Dorsolateral prefrontal cortex (tissue), 120 donors: ENCODE measurements at regions of chr20 and their contacts with region 1.

Region 1: GRCh38 chr20:18632196-18633009 is 44.5 kb downstream of the DTD1 start:
- DNase-seq: peak; percentile 52 to 85 (median 78)
- H3K4me3 ChIP-seq: no peak overlapping the region
- H3K27ac ChIP-seq: peak overlapping the region in 51 of 59 donors; percentile 3 to 88 (median 61)
- H3K27me3 ChIP-seq: no peaks in the 10 kb centered on the region
- CTCF ChIP-seq: peak; percentile 66 to 99 (median 92)

Region 2: GRCh38 chr20:18657575-18657974 is 25.2 kb after region 1 on chr20:
- intact Hi-C with region 1: no loop called
- DNase-seq: no peak
- H3K4me3 ChIP-seq: no peak overlapping the region
- H3K27ac ChIP-seq: no peak overlapping the region
- H3K27me3 ChIP-seq: no peaks in the 10 kb centered on the region
- CTCF ChIP-seq: no peak

Region 3: DNA sequence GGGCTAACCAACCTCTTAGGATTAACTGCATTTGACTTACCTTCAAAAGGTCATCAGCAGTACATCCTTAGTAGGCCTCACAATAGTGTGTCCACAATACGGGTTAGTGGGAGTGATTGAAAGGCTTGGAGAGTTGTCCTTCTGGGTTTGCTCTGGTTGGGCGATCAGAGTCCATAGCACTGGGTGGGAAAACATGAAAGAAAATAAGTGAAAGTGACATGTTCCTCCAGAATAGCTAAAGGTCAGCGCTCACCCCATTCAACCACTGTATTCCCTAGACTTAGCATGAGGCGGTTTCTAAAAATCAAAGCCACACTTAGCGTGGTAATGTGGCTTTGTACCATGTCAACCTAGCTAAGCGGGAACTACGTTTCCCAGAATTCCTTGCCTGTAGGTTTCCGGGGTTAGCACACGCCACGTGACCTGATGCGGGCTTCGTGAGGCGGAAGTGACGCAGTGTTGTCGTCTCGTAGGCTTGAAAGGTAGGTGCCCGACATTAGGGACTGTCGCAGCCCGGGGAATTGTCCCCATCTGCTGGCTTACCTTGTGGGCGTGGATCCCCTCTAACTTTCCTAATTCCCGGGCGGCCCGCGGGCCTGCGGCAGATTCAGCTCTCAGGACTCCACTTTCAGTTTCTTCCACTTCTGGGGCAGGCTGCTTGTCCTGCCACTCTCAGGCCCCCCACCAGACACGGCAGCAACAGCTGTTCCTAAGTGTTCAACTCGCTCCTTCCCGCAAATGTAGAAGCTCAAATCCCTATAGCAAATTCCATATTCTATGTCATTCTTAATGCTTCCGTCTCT is 161.4 kb after region 1 on chr20:
- intact Hi-C with region 1: loop called in 1 of 2 experiments (anchors 5 kb)
- DNase-seq: peak; percentile 87 to 96 (median 93)
- H3K4me3 ChIP-seq: peak overlapping the region; percentile 57 to 99 (median 81)
- H3K27ac ChIP-seq: peak overlapping the region; percentile 17 to 96 (median 88)
- H3K27me3 ChIP-seq: peaks cover 0 to 4% (median 0%) of the 10 kb centered on the region in 45 donors
- CTCF ChIP-seq: peak in 49 of 56 donors; percentile 7 to 66 (median 42)

Region 4: GRCh38 chr20:18805881-18806280 is 173.5 kb after region 1 on chr20:
- intact Hi-C with region 1: loop called in 1 of 2 experiments (anchors 10 kb)
- DNase-seq: no peak
- H3K4me3 ChIP-seq: no peak overlapping the region
- H3K27ac ChIP-seq: no peak overlapping the region
- H3K27me3 ChIP-seq: peaks cover 0 to 7% (median 0%) of the 10 kb centered on the region in 45 donors
- CTCF ChIP-seq: no peak

Region 5: DNA sequence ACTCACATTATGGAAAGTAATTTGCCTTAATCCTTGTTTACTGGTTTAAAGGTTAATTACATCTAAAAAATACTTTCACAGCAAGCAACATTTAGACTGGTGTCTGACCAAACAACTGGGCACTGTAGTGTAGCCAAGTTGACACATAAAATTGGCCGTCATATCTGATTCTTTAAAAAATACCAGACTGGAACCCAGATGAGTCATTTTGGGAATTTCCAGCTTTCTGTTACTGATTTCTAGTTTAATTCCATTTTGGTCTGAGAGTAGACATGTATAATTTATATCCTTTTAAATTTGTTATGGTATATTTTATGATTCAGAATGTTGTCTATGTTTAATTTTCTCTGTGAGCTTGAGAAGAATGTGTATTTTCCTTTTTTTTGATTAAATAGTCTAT is 225.2 kb after region 1 on chr20:
- intact Hi-C with region 1: no loop called
- DNase-seq: no peak
- H3K4me3 ChIP-seq: no peak overlapping the region
- H3K27ac ChIP-seq: peak overlapping the region in 1 of 59 donors; percentile 14
- H3K27me3 ChIP-seq: no peaks in the 10 kb centered on the region
- CTCF ChIP-seq: no peak

Region 6: GRCh38 chr20:18904624-18905023 is 272.2 kb after region 1 on chr20:
- intact Hi-C with region 1: loop called in 1 of 2 experiments (anchors 10 kb)
- DNase-seq: peak in 4 of 10 donors; percentile 5 to 36 (median 17)
- H3K4me3 ChIP-seq: no peak overlapping the region
- H3K27ac ChIP-seq: no peak overlapping the region
- H3K27me3 ChIP-seq: no peaks in the 10 kb centered on the region
- CTCF ChIP-seq: peak in 39 of 56 donors; percentile 8 to 54 (median 33)